Activated CD4-positive, alpha-beta memory T cell treated with anti-CD3 and anti-CD28 coated beads for 36 hours (primary cell): ENCODE measurements at regions of chr19 and their contacts with region 1.

Region 1: GRCh38 chr19:35269421-35270117 is 807 bp downstream of the USF2 start:
- DNase-seq: peak; percentile 88
- H3K4me3 Mint-ChIP-seq: peak overlapping the region; percentile 56
- H3K27ac Mint-ChIP-seq: peak overlapping the region; percentile 74
- H3K4me1 Mint-ChIP-seq: peaks cover 28% of the 10 kb centered on the region
- H3K27me3 Mint-ChIP-seq: no peaks in the 10 kb centered on the region

Region 2: DNA sequence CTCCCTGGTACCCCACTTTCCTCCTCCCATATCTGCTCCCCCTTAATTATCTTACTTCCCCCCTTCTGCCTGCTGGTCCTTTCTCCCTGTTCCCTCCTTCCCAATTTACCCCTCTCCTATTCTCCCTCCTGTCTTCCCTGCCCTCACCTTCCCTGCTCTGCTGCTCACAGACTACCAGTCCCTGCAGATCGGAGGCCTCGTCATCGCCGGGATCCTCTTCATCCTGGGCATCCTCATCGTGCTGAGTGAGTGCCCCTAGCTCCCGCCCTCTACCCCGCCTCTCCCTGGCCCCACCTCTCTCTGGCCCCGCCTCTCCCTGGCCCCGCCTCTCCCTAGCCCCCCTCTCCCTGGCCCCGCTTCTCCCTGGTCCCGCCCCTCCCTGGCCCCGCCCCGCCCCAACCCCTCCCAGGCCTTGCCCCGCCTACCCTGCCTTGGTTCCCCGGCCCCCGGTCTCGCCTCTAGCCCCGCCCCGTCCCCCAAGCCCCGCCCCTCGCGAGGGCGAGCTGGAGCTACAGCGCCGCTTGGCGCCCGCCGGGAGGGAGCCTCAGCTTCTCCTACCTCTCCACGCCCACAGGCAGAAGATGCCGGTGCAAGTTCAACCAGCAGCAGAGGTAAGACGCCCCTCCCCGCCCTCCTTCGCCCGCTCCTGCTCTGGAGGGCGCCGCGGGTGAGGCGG is 128.5 kb before region 1 on chr19:
- CTCF ChIA-PET with region 1: interaction called, 9 read pairs
- POLR2A ChIA-PET with region 1: interaction called, 3 read pairs
- intact Hi-C with region 1: loop called (anchors 5 kb)
- DNase-seq: peak; percentile 99
- H3K4me3 Mint-ChIP-seq: peak overlapping the region; percentile 71
- H3K27ac Mint-ChIP-seq: no peak overlapping the region
- H3K4me1 Mint-ChIP-seq: peaks cover 30% of the 10 kb centered on the region
- H3K27me3 Mint-ChIP-seq: no peaks in the 10 kb centered on the region

Region 3: GRCh38 chr19:35247526-35248306 is 21.9 kb before region 1 on chr19:
- CTCF ChIA-PET with region 1: no interaction called
- POLR2A ChIA-PET with region 1: no interaction called
- intact Hi-C with region 1: loop called (anchors 1 kb)
- DNase-seq: peak; percentile 76
- H3K4me3 Mint-ChIP-seq: peak overlapping the region; percentile 86
- H3K27ac Mint-ChIP-seq: peak overlapping the region; percentile 96
- H3K4me1 Mint-ChIP-seq: peaks cover 44% of the 10 kb centered on the region
- H3K27me3 Mint-ChIP-seq: peaks cover 1% of the 10 kb centered on the region

Region 4: DNA sequence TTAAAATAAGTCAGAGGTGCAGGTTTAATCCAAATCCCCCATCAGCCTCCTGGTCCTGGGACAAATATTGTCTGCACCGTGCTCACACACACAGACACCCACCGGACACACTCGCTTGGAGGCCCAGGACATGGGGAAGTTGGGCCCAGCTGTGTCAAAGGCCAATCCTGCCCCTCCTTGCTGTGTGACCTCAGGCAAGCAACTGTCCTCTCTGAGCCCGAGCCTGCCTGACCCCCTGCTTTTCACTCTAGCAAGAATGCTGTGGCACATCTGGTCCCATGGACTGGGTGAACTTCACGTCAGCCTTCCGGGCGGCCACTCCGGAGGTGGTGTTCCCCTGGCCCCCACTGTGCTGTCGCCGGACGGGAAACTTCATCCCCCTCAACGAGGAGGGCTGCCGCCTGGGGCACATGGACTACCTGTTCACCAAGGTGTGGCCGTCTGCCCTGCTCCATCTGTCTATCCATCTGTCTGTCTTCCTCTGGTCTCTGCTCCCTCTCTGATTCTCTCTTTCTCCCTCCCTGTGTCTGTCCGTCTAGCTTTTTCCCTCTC is 406.1 kb after region 1 on chr19:
- CTCF ChIA-PET with region 1: no interaction called
- POLR2A ChIA-PET with region 1: no interaction called
- intact Hi-C with region 1: no loop called
- DNase-seq: no peak
- H3K4me3 Mint-ChIP-seq: no peak overlapping the region
- H3K27ac Mint-ChIP-seq: no peak overlapping the region
- H3K4me1 Mint-ChIP-seq: peaks cover 8% of the 10 kb centered on the region
- H3K27me3 Mint-ChIP-seq: peaks cover 13% of the 10 kb centered on the region